ENCODE measurements at regions of chr10 and their contacts with region 1.

Region 1: GRCh38 chr10:32790483-32790882 is 167.5 kb downstream of the ITGB1 start:
- DNase-seq: no peak
- ATAC-seq: no peak
- H3K4me3 ChIP-seq: no peak overlapping the region
- H3K27ac ChIP-seq: no peak overlapping the region
- H3K4me1 ChIP-seq: no peaks in the 10 kb centered on the region
- H3K27me3 ChIP-seq: no peaks in the 10 kb centered on the region
- CTCF ChIP-seq: no peak

Region 2: DNA sequence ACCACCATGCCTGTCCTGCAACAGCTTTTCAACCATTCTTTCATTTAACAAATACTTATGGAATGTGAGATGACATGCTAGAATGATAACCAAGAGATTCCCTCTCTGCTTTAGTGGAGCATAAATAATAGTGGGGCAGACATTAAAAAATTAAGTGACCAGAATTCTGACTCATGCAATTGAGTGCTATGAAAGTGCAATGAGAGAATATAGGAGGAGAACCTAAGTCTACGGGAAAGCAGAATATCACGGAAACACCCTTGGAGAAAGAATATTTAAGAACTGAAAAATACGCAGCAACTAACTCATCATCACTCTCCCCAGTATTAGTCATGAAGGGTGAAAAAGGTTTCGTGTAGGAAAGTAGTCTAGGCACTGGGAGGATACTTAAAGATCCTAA is 741.4 kb before region 1 on chr10:
- intact Hi-C with region 1: no loop called
- DNase-seq: no peak
- ATAC-seq: no peak
- H3K4me3 ChIP-seq: no peak overlapping the region
- H3K27ac ChIP-seq: no peak overlapping the region
- H3K4me1 ChIP-seq: peaks cover 80% of the 10 kb centered on the region
- H3K27me3 ChIP-seq: no peaks in the 10 kb centered on the region
- CTCF ChIP-seq: no peak

Region 3: DNA sequence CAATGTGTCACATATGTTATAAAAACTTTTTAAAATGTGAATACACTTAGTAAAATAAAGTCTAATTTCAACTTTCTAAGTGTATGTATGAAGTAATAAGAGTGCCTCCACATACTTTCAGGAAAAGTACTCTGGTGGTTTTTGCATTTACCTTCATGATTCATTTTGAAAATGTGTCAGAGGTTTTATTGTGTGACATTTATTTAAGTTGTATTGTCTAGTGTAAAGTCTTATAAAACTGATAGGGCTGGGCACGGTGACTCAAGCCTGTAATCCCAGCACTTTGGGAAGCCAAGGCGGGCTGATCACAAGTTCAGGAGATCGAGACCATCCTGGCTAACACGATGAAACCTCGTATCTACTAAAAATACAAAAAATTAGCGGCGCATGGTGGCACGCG is 59.0 kb before region 1 on chr10:
- intact Hi-C with region 1: no loop called
- DNase-seq: no peak
- ATAC-seq: no peak
- H3K4me3 ChIP-seq: no peak overlapping the region
- H3K27ac ChIP-seq: no peak overlapping the region
- H3K4me1 ChIP-seq: no peaks in the 10 kb centered on the region
- H3K27me3 ChIP-seq: no peaks in the 10 kb centered on the region
- CTCF ChIP-seq: no peak

Region 4: DNA sequence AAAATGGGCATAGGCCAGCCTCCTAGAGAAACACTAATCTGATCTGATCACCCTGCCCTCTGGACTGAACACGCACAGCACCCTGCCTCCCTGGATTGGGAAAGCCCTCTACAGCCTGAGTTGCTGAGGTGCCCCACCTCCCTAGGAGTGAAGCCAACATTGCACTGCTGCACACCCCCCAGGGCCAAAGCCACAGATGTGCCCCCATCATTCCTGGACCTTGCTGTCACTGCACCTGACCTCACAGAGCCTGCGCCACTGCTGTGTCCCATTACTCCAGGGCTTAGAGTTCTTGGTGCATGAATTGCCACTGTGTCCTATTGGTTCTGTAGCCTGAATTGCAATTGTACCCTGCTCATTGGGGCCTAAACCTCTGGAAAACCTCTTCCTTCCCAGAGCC is 65.9 kb after region 1 on chr10:
- intact Hi-C with region 1: no loop called
- DNase-seq: no peak
- ATAC-seq: no peak
- H3K4me3 ChIP-seq: no peak overlapping the region
- H3K27ac ChIP-seq: no peak overlapping the region
- H3K4me1 ChIP-seq: no peaks in the 10 kb centered on the region
- H3K27me3 ChIP-seq: no peaks in the 10 kb centered on the region
- CTCF ChIP-seq: no peak

Region 5: GRCh38 chr10:33008499-33009243 is 218.2 kb after region 1 on chr10:
- intact Hi-C with region 1: loop called (anchors 5 kb)
- DNase-seq: no peak
- ATAC-seq: peak in 1 of 2 donors; percentile 56
- H3K4me3 ChIP-seq: no peak overlapping the region
- H3K27ac ChIP-seq: no peak overlapping the region
- H3K4me1 ChIP-seq: peaks cover 40% of the 10 kb centered on the region
- H3K27me3 ChIP-seq: no peaks in the 10 kb centered on the region
- CTCF ChIP-seq: peak; percentile 98